Activated B cell treated with CpG ODN at 0.5 μM for 24 hours (primary cell): ENCODE measurements at regions of chr6 and their contacts with region 1.

Region 1: GRCh38 chr6:42745707-42746462 is at the start of gene TBCC:
- DNase-seq: peak; percentile 72
- ATAC-seq: peak; percentile 75
- H3K4me3 Mint-ChIP-seq: peak within 1 kb of the TSS; percentile 100
- H3K27ac Mint-ChIP-seq: peak within 1 kb of the TSS; percentile 100
- H3K4me1 Mint-ChIP-seq: peaks cover 32% of the 10 kb centered on the region
- H3K27me3 Mint-ChIP-seq: no peaks in the 10 kb centered on the region
- CTCF ChIP-seq: no peak
- total RNA-seq, gene TBCC: 41.5 and 41.7 TPM in 2 replicates

Region 2: DNA sequence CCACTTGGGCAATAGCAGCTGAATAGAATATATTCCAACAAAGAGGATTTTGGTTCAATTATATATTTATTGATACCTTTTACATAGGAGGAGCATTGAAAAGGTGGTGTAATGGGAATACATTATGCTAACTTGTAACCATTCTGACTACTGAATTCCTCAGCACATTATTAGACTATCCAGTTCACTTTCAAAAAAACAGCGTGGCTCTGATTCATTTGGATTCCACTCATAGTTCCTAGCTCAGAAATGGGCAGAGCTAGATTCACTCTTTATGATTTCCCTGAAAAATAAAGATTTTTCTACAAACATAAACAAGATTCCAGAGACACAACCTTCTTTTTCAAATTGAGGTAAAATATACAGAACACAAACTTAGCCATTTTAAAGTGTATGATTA is 285.0 kb before region 1 on chr6:
- CTCF ChIA-PET with region 1: no interaction called
- POLR2A ChIA-PET with region 1: interaction called, 16 read pairs
- intact Hi-C with region 1: no loop called
- DNase-seq: no peak
- ATAC-seq: no peak
- H3K4me3 Mint-ChIP-seq: no peak overlapping the region
- H3K27ac Mint-ChIP-seq: no peak overlapping the region
- H3K4me1 Mint-ChIP-seq: no peaks in the 10 kb centered on the region
- H3K27me3 Mint-ChIP-seq: peaks cover 4% of the 10 kb centered on the region
- CTCF ChIP-seq: no peak

Region 3: GRCh38 chr6:42756722-42757121 is 10.8 kb after region 1 on chr6:
- CTCF ChIA-PET with region 1: no interaction called
- POLR2A ChIA-PET with region 1: interaction called, 17 read pairs
- intact Hi-C with region 1: no loop called
- DNase-seq: no peak
- ATAC-seq: no peak
- H3K4me3 Mint-ChIP-seq: no peak overlapping the region
- H3K27ac Mint-ChIP-seq: no peak overlapping the region
- H3K4me1 Mint-ChIP-seq: peaks cover 10% of the 10 kb centered on the region
- H3K27me3 Mint-ChIP-seq: no peaks in the 10 kb centered on the region
- CTCF ChIP-seq: no peak

Region 4: DNA sequence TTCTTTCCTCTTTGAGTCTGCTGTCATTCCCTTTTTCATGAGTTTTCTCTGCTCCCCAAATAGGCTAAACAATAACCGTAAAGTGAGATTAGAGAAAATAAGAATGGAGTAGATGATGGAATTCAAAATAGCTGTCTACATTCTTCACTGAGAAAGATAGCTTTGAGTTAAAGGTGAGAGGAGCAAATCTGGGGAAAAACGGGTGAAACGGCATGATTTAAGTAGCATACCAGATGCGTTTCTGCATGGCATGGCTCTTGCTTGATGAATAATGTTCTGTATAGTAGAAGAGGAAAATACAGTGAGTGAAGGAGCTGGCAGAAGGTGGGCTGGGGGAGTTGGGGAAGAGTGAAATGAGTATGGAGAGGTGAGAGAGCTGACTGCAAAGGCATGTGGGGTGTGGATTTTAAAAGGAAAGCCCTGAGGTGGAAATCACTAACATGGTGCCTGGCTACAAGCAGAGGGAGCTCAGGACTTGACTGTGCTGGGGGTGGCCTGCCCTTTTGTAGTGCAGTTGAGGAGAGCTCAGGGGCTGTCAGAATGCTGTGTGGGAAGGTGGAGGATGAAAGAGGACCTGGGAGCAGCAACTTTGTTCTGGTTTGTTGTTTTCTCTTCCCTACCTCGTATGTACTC is 44.8 kb after region 1 on chr6:
- CTCF ChIA-PET with region 1: no interaction called
- POLR2A ChIA-PET with region 1: interaction called, 1,220 read pairs
- intact Hi-C with region 1: no loop called
- DNase-seq: no peak
- ATAC-seq: peak; percentile 6
- H3K4me3 Mint-ChIP-seq: no peak overlapping the region
- H3K27ac Mint-ChIP-seq: peak overlapping the region; percentile 65
- H3K4me1 Mint-ChIP-seq: peaks cover 22% of the 10 kb centered on the region
- H3K27me3 Mint-ChIP-seq: no peaks in the 10 kb centered on the region
- CTCF ChIP-seq: no peak

Region 5: DNA sequence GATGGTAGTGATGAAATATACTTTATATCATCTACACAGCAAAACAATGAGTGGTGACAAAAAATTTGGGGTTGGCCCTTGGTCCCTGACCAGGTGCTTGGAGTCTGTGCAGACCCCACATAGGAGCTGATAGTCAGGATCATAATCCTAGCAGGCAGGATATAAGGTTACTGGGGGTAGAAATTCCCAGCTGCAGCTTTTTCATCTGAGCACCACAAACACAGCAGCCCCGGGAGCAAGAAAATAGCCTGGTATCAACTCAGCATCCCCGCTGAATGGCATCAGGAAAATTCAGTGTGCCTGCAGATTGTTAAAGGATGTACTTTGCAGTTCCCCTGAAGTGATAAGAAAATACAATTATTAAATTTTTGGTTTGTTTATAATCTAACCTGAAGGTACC is 105.7 kb after region 1 on chr6:
- CTCF ChIA-PET with region 1: no interaction called
- POLR2A ChIA-PET with region 1: interaction called, 10 read pairs
- intact Hi-C with region 1: no loop called
- DNase-seq: no peak
- ATAC-seq: no peak
- H3K4me3 Mint-ChIP-seq: no peak overlapping the region
- H3K27ac Mint-ChIP-seq: no peak overlapping the region
- H3K4me1 Mint-ChIP-seq: no peaks in the 10 kb centered on the region
- H3K27me3 Mint-ChIP-seq: no peaks in the 10 kb centered on the region
- CTCF ChIP-seq: no peak

Region 6: GRCh38 chr6:43013843-43014433 is 268.1 kb after region 1 on chr6 and contains the starts of genes KLHDC3 and MEA1:
- CTCF ChIA-PET with region 1: no interaction called
- POLR2A ChIA-PET with region 1: no interaction called
- intact Hi-C with region 1: loop called (anchors 1 kb)
- DNase-seq: peak; percentile 94
- ATAC-seq: peak; percentile 93
- H3K4me3 Mint-ChIP-seq: peak within 1 kb of the TSS; percentile 97
- H3K27ac Mint-ChIP-seq: peak within 1 kb of the TSS; percentile 89
- H3K4me1 Mint-ChIP-seq: peaks cover 51% of the 10 kb centered on the region
- H3K27me3 Mint-ChIP-seq: no peaks in the 10 kb centered on the region
- CTCF ChIP-seq: no peak
- total RNA-seq, gene KLHDC3: 36.4 and 36.7 TPM in 2 replicates
- total RNA-seq, gene MEA1: 44.4 and 48.3 TPM in 2 replicates